Activated CD4-positive, alpha-beta memory T cell treated with anti-CD3 and anti-CD28 coated beads, Interleukin-2, amount 10 ng/mL, durations not matched to agents 7 days and 5 days (primary cell): ENCODE measurements at regions of chr1 and their contacts with region 1.

Region 1: GRCh38 chr1:45550401-45551351 is at the start of gene AKR1A1:
- DNase-seq: peak; percentile 91
- H3K4me3 Mint-ChIP-seq: peak within 1 kb of the TSS; percentile 93
- H3K27ac Mint-ChIP-seq: peak within 1 kb of the TSS; percentile 78
- H3K4me1 Mint-ChIP-seq: peaks cover 28% of the 10 kb centered on the region
- H3K27me3 Mint-ChIP-seq: peaks cover 3% of the 10 kb centered on the region
- total RNA-seq, gene AKR1A1: 144 TPM

Region 2: DNA sequence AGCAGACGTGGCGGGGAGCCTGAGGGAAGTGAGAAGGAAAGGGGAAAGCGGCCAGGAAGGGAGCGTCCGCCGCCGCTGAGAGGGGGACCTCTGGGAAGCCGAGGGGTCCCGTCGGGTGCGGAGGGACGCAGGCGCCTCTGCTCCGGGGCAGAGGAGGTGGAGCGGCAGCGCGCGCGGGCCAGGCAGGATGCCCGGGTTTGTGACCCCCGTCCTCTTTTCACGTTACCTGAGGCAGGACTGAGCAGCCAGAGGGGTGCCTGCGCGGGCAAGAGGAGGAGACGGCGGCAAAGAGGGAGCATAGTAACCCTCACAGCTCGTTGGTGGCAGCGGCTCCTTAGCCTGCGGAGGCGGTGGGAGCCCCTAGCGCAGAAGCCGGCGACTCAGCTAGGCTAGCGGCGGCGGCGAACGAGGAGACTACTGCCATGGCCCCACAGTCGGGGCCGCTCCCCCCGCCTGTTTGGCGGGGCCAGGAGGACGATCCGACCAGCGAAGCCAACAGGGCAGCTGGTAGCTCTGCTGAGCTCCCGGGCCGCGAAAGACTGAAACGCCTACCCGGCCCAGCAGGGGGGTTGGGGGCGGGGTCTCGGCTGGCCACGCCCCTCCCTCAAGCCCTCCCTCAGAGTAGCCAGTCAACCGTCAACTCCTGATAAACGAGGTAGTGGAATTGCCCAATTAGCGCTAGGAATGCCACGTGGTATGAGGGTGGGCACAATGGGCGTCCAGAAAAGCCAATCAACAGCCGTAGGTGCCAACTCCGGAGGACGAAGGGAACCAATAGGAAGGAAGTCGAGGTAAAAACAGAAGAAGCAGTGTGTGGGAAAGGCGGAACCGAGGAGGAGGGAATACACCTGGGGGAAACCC is 59.8 kb before region 1 on chr1 and contains the start of gene TESK2:
- CTCF ChIA-PET with region 1: interaction called, 11 read pairs
- POLR2A ChIA-PET with region 1: interaction called, 5 read pairs
- DNase-seq: peak; percentile 98
- H3K4me3 Mint-ChIP-seq: no peak within 1 kb of the TSS
- H3K27ac Mint-ChIP-seq: no peak within 1 kb of the TSS
- H3K4me1 Mint-ChIP-seq: peaks cover 7% of the 10 kb centered on the region
- H3K27me3 Mint-ChIP-seq: peaks cover 7% of the 10 kb centered on the region
- total RNA-seq, gene TESK2: 3.7 to 4.3 TPM

Region 3: GRCh38 chr1:45512641-45513054 is 38.0 kb before region 1 on chr1:
- CTCF ChIA-PET with region 1: interaction called, 11 read pairs
- POLR2A ChIA-PET with region 1: interaction called, 8 read pairs
- DNase-seq: peak; percentile 68
- H3K4me3 Mint-ChIP-seq: no peak overlapping the region
- H3K27ac Mint-ChIP-seq: peak overlapping the region; percentile 47
- H3K4me1 Mint-ChIP-seq: peaks cover 19% of the 10 kb centered on the region
- H3K27me3 Mint-ChIP-seq: no peaks in the 10 kb centered on the region

Region 4: DNA sequence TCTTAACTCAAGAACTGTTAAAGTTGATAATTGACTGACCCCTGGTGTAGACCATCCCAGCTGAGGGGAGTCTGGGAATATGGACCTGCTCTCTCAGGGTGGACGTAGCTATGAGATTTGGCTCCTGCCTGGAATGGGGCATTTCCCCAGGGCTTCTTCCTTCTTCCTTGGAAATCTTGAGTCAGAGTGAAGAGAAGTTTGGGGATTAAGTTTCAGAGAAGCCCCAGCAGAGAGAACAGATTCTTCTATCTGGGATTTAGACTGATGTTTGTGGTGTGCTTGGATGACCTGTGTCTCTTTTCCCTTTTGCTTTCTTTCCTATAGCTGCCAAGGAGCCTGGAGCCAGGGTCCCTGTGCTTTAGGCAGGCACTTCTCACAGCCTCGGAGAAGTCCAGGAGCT is 13.2 kb after region 1 on chr1:
- CTCF ChIA-PET with region 1: interaction called, 11 read pairs
- POLR2A ChIA-PET with region 1: interaction called, 16 read pairs
- DNase-seq: no peak
- H3K4me3 Mint-ChIP-seq: no peak overlapping the region
- H3K27ac Mint-ChIP-seq: no peak overlapping the region
- H3K4me1 Mint-ChIP-seq: peaks cover 5% of the 10 kb centered on the region
- H3K27me3 Mint-ChIP-seq: no peaks in the 10 kb centered on the region

Region 5: GRCh38 chr1:45583264-45583665 is 32.6 kb after region 1 on chr1:
- CTCF ChIA-PET with region 1: no interaction called
- POLR2A ChIA-PET with region 1: interaction called, 24 read pairs
- DNase-seq: peak; percentile 96
- H3K4me3 Mint-ChIP-seq: peak overlapping the region; percentile 88
- H3K27ac Mint-ChIP-seq: peak overlapping the region; percentile 98
- H3K4me1 Mint-ChIP-seq: peaks cover 29% of the 10 kb centered on the region
- H3K27me3 Mint-ChIP-seq: no peaks in the 10 kb centered on the region